Psoas muscle (tissue), 8 donors: ENCODE measurements at regions of chr22 and their contacts with region 1.

Region 1: GRCh38 chr22:40024201-40025061 is 29.7 kb downstream of the FAM83F start:
- DNase-seq: peak; percentile 54 to 81
- ATAC-seq: peak; percentile 70 to 95 (median 83)
- H3K4me3 ChIP-seq: no peak overlapping the region
- H3K27ac ChIP-seq: no peak overlapping the region
- H3K4me1 ChIP-seq: no peaks in the 10 kb centered on the region
- H3K27me3 ChIP-seq: peaks cover 0 to 5% (median 5%) of the 10 kb centered on the region in 3 donors
- CTCF ChIP-seq: peak; percentile 76

Region 2: GRCh38 chr22:39559454-39560105 is 464.9 kb before region 1 on chr22:
- intact Hi-C with region 1: loop called in 1 of 2 experiments (anchors 5 kb)
- DNase-seq: no peak
- ATAC-seq: peak in 1 of 4 donors; percentile 37
- H3K4me3 ChIP-seq: no peak overlapping the region
- H3K27ac ChIP-seq: no peak overlapping the region
- H3K4me1 ChIP-seq: peaks cover 3% of the 10 kb centered on the region
- H3K27me3 ChIP-seq: peaks cover 0 to 65% (median 24%) of the 10 kb centered on the region in 3 donors
- CTCF ChIP-seq: no peak

Region 3: GRCh38 chr22:39622881-39623367 is 401.5 kb before region 1 on chr22:
- intact Hi-C with region 1: loop called (anchors 2 to 5 kb)
- DNase-seq: peak; percentile 65 to 86
- ATAC-seq: peak; percentile 80 to 94 (median 87)
- H3K4me3 ChIP-seq: no peak overlapping the region
- H3K27ac ChIP-seq: no peak overlapping the region
- H3K4me1 ChIP-seq: no peaks in the 10 kb centered on the region
- H3K27me3 ChIP-seq: peaks cover 0 to 69% (median 21%) of the 10 kb centered on the region in 3 donors
- CTCF ChIP-seq: peak; percentile 66

Region 4: DNA sequence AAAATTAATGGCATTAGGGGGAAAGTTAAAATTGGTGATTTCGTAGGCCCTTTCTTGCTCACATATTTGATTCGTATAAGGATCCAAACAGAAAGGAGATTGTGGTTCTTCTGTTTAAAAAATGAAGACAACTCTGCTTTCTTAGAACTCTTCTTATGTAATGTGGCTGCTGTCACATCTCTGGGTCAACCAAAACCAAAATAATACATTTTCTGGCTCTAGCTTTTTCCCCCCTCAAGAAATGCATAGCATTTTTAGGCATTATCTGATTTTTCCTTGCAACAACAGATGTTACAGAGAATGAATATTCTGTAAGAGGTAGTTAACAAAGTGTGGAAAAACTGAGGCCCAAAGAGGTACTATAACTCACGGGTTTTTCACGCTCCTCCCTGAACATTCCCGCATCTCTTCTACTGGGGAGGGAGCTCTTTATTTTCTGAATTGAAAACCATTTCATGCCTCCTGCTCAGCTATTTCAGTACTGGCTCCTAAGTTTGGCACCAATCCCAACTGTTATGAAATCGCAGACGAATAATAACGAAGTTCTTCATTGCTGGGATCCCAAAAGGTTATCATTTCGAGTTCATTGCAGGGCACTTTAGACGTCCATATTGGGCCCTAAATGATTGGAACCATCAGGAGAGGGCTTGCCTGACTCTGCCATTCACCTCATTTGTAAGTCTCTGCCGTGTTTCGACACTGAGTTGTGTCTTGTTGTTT is 106.5 kb before region 1 on chr22:
- intact Hi-C with region 1: no loop called
- DNase-seq: no peak
- ATAC-seq: peak in 1 of 4 donors; percentile 30
- H3K4me3 ChIP-seq: no peak overlapping the region
- H3K27ac ChIP-seq: no peak overlapping the region
- H3K4me1 ChIP-seq: no peaks in the 10 kb centered on the region
- H3K27me3 ChIP-seq: peaks cover 0 to 13% (median 0%) of the 10 kb centered on the region in 3 donors
- CTCF ChIP-seq: no peak